ENCODE measurements at regions of chr13 and their contacts with region 1.

Region 1: GRCh38 chr13:75326173-75327134 is 155.5 kb downstream of the TBC1D4 start:
- DNase-seq: peak; percentile 12 to 92 (median 40)
- ATAC-seq: peak; percentile 86
- H3K4me3 ChIP-seq: peak overlapping the region; percentile 75
- H3K4me3 Mint-ChIP-seq: peak overlapping the region; percentile 92
- H3K27ac ChIP-seq: peak overlapping the region; percentile 89 to 93
- H3K27ac Mint-ChIP-seq: peak overlapping the region; percentile 93
- H3K4me1 ChIP-seq: peaks cover 5% of the 10 kb centered on the region
- H3K4me1 Mint-ChIP-seq: peaks cover 57% of the 10 kb centered on the region
- H3K27me3 ChIP-seq: no peaks in the 10 kb centered on the region
- H3K27me3 Mint-ChIP-seq: no peaks in the 10 kb centered on the region
- CTCF ChIP-seq: no peak

Region 2: DNA sequence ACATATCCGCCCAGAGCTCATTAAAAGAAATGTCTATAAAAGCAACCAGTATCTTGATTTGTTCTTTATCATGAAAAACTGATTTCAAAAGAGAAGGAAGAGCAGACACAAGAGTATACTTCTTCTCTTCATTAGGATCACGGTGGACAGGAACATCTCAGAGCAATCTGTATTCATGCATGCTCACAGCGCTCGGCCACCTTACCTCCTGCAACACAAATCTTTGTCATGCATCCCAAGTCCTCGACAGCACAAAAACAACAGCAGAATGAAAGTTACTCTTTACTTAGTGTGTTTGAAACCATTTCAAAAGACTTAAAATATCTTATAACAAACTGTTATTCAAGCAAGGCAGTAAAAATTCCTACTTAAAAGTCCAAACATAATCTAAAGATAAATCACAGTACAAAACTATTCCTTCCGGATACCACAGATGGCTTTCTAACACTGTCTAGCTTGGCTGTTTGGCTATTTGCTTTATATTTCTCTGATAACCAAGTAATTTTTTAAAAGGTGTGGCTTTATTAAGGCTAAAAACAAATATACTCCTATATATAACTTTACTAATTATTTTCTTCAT is 19.0 kb before region 1 on chr13:
- CTCF ChIA-PET with region 1: no interaction called
- POLR2A ChIA-PET with region 1: interaction called, 131 read pairs
- intact Hi-C with region 1: no loop called
- DNase-seq: no peak
- ATAC-seq: no peak
- H3K4me3 ChIP-seq: no peak overlapping the region
- H3K4me3 Mint-ChIP-seq: no peak overlapping the region
- H3K27ac ChIP-seq: no peak overlapping the region
- H3K27ac Mint-ChIP-seq: no peak overlapping the region
- H3K4me1 ChIP-seq: peaks cover under 1% of the 10 kb centered on the region
- H3K4me1 Mint-ChIP-seq: peaks cover 16% of the 10 kb centered on the region
- H3K27me3 ChIP-seq: no peaks in the 10 kb centered on the region
- H3K27me3 Mint-ChIP-seq: no peaks in the 10 kb centered on the region
- CTCF ChIP-seq: no peak

Region 3: GRCh38 chr13:75312884-75313520 is 13.5 kb before region 1 on chr13:
- CTCF ChIA-PET with region 1: interaction called, 3 read pairs
- POLR2A ChIA-PET with region 1: interaction called, 131 read pairs
- intact Hi-C with region 1: loop called in 1 of 2 experiments (anchors 1 kb)
- DNase-seq: peak in 10 of 14 experiments; percentile 4 to 68 (median 15)
- ATAC-seq: peak; percentile 80
- H3K4me3 ChIP-seq: no peak overlapping the region
- H3K4me3 Mint-ChIP-seq: peak overlapping the region; percentile 51
- H3K27ac ChIP-seq: no peak overlapping the region
- H3K27ac Mint-ChIP-seq: peak overlapping the region; percentile 77
- H3K4me1 ChIP-seq: peaks cover 14% of the 10 kb centered on the region
- H3K4me1 Mint-ChIP-seq: peaks cover 45% of the 10 kb centered on the region
- H3K27me3 ChIP-seq: no peaks in the 10 kb centered on the region
- H3K27me3 Mint-ChIP-seq: no peaks in the 10 kb centered on the region
- CTCF ChIP-seq: no peak

Region 4: DNA sequence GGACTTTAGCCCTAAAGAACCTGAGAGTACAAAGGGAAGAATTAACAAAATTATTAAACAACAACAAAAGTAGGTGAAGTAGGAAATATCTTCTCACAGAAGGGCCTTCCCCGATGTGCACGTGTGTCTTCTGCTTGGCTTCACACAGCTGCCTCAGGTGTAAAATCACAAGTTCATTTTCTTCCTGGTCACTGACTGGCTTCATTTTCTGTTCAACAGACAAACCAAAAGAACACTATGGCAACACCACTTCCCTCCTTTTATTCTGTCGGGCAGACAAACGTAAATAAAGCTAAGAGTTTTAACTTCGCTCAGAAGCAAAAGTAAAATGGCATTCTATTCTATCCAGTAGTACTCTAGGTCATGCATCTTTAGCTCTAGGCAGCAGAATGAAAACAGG is 14.6 kb after region 1 on chr13:
- CTCF ChIA-PET with region 1: no interaction called
- POLR2A ChIA-PET with region 1: interaction called, 13 read pairs
- intact Hi-C with region 1: no loop called
- DNase-seq: no peak
- ATAC-seq: no peak
- H3K4me3 ChIP-seq: no peak overlapping the region
- H3K4me3 Mint-ChIP-seq: no peak overlapping the region
- H3K27ac ChIP-seq: no peak overlapping the region
- H3K27ac Mint-ChIP-seq: no peak overlapping the region
- H3K4me1 ChIP-seq: no peaks in the 10 kb centered on the region
- H3K4me1 Mint-ChIP-seq: no peaks in the 10 kb centered on the region
- H3K27me3 ChIP-seq: no peaks in the 10 kb centered on the region
- H3K27me3 Mint-ChIP-seq: no peaks in the 10 kb centered on the region
- CTCF ChIP-seq: no peak

Region 5: GRCh38 chr13:75357576-75358289 is 31.3 kb after region 1 on chr13:
- CTCF ChIA-PET with region 1: interaction called, 14 read pairs
- POLR2A ChIA-PET with region 1: interaction called, 33 read pairs
- intact Hi-C with region 1: loop called (anchors 1 to 5 kb)
- DNase-seq: peak; percentile 23 to 81 (median 44)
- ATAC-seq: peak; percentile 100
- H3K4me3 ChIP-seq: no peak overlapping the region
- H3K4me3 Mint-ChIP-seq: no peak overlapping the region
- H3K27ac ChIP-seq: no peak overlapping the region
- H3K27ac Mint-ChIP-seq: no peak overlapping the region
- H3K4me1 ChIP-seq: no peaks in the 10 kb centered on the region
- H3K4me1 Mint-ChIP-seq: peaks cover 4% of the 10 kb centered on the region
- H3K27me3 ChIP-seq: no peaks in the 10 kb centered on the region
- H3K27me3 Mint-ChIP-seq: no peaks in the 10 kb centered on the region
- CTCF ChIP-seq: peak; percentile 83

Region 6: GRCh38 chr13:75537401-75538365 is 211.2 kb after region 1 on chr13 and contains the start of gene COMMD6:
- CTCF ChIA-PET with region 1: no interaction called
- POLR2A ChIA-PET with region 1: interaction called, 16 read pairs
- intact Hi-C with region 1: loop called in 1 of 2 experiments (anchors 5 kb)
- DNase-seq: peak; percentile 40 to 84 (median 57)
- ATAC-seq: peak; percentile 92
- H3K4me3 ChIP-seq: peak within 1 kb of the TSS; percentile 67
- H3K4me3 Mint-ChIP-seq: peak within 1 kb of the TSS; percentile 99
- H3K27ac ChIP-seq: peak within 1 kb of the TSS; percentile 4 to 70
- H3K27ac Mint-ChIP-seq: peak within 1 kb of the TSS; percentile 89
- H3K4me1 ChIP-seq: peaks cover 27% of the 10 kb centered on the region
- H3K4me1 Mint-ChIP-seq: peaks cover 55% of the 10 kb centered on the region
- H3K27me3 ChIP-seq: no peaks in the 10 kb centered on the region
- H3K27me3 Mint-ChIP-seq: no peaks in the 10 kb centered on the region
- CTCF ChIP-seq: no peak
- total RNA-seq, gene COMMD6: 211 to 217 TPM

Region 7: GRCh38 chr13:76837801-76838200 is 1511.3 kb after region 1 on chr13:
- CTCF ChIA-PET with region 1: no interaction called
- POLR2A ChIA-PET with region 1: no interaction called
- intact Hi-C with region 1: no loop called
- DNase-seq: no peak
- ATAC-seq: no peak
- H3K4me3 ChIP-seq: no peak overlapping the region
- H3K4me3 Mint-ChIP-seq: no peak overlapping the region
- H3K27ac ChIP-seq: no peak overlapping the region
- H3K27ac Mint-ChIP-seq: no peak overlapping the region
- H3K4me1 ChIP-seq: no peaks in the 10 kb centered on the region
- H3K4me1 Mint-ChIP-seq: no peaks in the 10 kb centered on the region
- H3K27me3 ChIP-seq: no peaks in the 10 kb centered on the region
- H3K27me3 Mint-ChIP-seq: peaks cover 16% of the 10 kb centered on the region
- CTCF ChIP-seq: no peak

Region 8: GRCh38 chr13:76991796-76992547 is 1665.5 kb after region 1 on chr13 and contains the start of gene CLN5:
- CTCF ChIA-PET with region 1: no interaction called
- POLR2A ChIA-PET with region 1: interaction called, 14 read pairs
- intact Hi-C with region 1: no loop called
- DNase-seq: peak; percentile 89 to 99 (median 95)
- ATAC-seq: peak; percentile 85
- H3K4me3 ChIP-seq: peak within 1 kb of the TSS; percentile 72
- H3K4me3 Mint-ChIP-seq: peak within 1 kb of the TSS; percentile 97
- H3K27ac ChIP-seq: peak within 1 kb of the TSS; percentile 89 to 95
- H3K27ac Mint-ChIP-seq: peak within 1 kb of the TSS; percentile 99
- H3K4me1 ChIP-seq: peaks cover 30% of the 10 kb centered on the region
- H3K4me1 Mint-ChIP-seq: peaks cover 60% of the 10 kb centered on the region
- H3K27me3 ChIP-seq: no peaks in the 10 kb centered on the region
- H3K27me3 Mint-ChIP-seq: no peaks in the 10 kb centered on the region
- CTCF ChIP-seq: no peak
- total RNA-seq, gene CLN5: 37.4 to 42.9 TPM

Measured in CD4-positive, alpha-beta T cell (primary cell).